ENCODE measurements at regions of chr2 and their contacts with region 1.

Region 1: GRCh38 chr2:27890146-27890923 is at the starts of genes BABAM2 and RBKS:
- DNase-seq: peak; percentile 89 to 90
- ATAC-seq: peak; percentile 93 to 98 (median 96)
- H3K4me3 ChIP-seq: peak within 1 kb of the TSS; percentile 55 to 84 (median 80)
- H3K27ac ChIP-seq: peak within 1 kb of the TSS; percentile 80 to 99 (median 98)
- H3K4me1 ChIP-seq: peaks cover 0 to 61% (median 34%) of the 10 kb centered on the region in 9 donors
- H3K27me3 ChIP-seq: no peaks in the 10 kb centered on the region
- CTCF ChIP-seq: no peak
- total RNA-seq, gene BABAM2: 54.9 to 83.4 (median 69.3) TPM
- total RNA-seq, gene RBKS: 3.4 to 9.1 (median 5.5) TPM

Region 2: DNA sequence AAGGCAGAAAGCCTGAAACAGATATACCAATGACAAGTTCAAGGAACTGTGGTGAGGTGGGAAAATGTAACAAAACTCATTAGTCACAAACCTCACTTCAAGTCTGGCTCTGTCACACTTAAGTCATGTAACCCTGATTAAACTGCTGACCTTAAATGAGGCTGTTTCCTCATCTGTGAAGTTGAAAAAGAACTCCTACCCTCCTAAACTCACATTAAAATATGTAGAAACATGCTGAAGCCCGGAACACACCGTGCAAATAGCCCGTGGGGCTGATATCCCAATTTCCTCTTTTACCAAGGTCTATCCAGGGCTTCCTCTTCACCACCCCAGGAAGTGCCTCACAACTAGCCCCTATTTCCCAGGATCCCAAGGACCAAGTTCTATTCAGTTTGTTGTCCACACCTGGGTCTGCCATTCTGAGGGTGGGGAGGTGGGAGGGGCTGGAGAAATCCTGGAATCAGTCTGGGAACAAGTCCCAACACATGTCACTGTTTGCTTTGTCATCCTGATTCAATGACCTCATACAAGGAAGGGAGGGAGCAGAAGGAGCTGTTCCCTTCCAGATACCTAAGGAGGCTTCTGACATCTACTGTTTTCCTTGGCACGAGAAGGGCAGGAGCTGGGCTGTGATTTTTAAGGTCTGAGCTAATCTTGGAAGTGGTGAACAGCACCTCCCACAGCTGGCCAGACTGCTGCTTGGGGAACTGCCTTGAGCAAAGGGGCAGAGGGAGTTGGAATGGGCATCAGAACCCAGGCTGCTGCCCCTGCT is 184.3 kb before region 1 on chr2:
- intact Hi-C with region 1: no loop called
- DNase-seq: peak; percentile 27 to 70
- ATAC-seq: peak; percentile 70 to 92 (median 86)
- H3K4me3 ChIP-seq: no peak overlapping the region
- H3K27ac ChIP-seq: peak overlapping the region; percentile 40 to 82 (median 78)
- H3K4me1 ChIP-seq: peaks cover 7 to 55% (median 28%) of the 10 kb centered on the region in 9 donors
- H3K27me3 ChIP-seq: no peaks in the 10 kb centered on the region
- CTCF ChIP-seq: no peak

Region 3: DNA sequence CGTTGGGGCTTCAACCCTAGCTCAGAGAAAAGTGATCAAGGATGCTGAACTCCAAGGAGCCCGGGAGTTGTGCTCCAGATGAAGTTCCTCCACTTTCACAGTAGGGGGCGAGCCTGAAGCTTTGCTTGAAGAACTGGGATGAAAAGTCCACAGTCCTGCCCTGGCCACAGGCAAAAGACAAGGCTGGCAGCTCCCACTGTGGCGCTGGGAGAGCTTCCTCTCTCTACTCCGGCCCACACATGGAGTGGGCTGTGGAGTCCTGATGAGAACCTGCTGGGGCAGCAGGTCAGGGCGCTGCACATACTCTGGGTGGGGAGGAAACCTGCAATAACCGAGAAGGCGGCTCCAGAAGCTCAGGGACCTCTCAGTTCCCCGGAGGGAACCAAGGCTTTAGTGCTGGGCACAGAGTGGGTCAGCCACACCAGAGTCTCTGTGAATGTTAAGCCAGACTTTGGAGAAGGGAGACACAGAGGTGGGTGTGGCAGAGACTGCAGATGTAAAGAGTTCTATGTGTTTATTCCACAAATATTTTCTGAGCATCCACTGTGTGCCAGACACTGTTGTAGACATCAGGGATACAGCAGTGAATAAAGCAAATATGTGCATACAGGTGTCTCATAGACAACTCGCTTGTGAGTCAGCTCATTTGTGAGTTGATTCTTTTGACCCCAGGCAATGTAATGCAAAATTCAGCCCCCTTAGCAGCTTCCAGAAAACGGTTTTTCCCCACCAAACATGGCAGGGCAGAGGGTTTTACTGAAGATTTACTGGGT is 166.8 kb before region 1 on chr2:
- intact Hi-C with region 1: loop called in 1 of 10 experiments (anchors 10 kb)
- DNase-seq: peak; percentile 43 to 72
- ATAC-seq: peak; percentile 50 to 80 (median 72)
- H3K4me3 ChIP-seq: no peak overlapping the region
- H3K27ac ChIP-seq: peak overlapping the region in 9 of 10 donors; percentile 49 to 84 (median 73)
- H3K4me1 ChIP-seq: peaks cover 4 to 60% (median 42%) of the 10 kb centered on the region in 9 donors
- H3K27me3 ChIP-seq: no peaks in the 10 kb centered on the region
- CTCF ChIP-seq: peak; percentile 69 to 91 (median 85)

Region 4: GRCh38 chr2:27807476-27807875 is 82.9 kb before region 1 on chr2:
- intact Hi-C with region 1: loop called in 1 of 10 experiments (anchors 10 kb)
- DNase-seq: no peak
- ATAC-seq: peak in 4 of 8 donors; percentile 40 to 59 (median 51)
- H3K4me3 ChIP-seq: no peak overlapping the region
- H3K27ac ChIP-seq: no peak overlapping the region
- H3K4me1 ChIP-seq: peaks cover 0 to 45% (median 0%) of the 10 kb centered on the region in 9 donors
- H3K27me3 ChIP-seq: no peaks in the 10 kb centered on the region
- CTCF ChIP-seq: peak in 7 of 9 donors; percentile 45 to 63 (median 57)

Region 5: DNA sequence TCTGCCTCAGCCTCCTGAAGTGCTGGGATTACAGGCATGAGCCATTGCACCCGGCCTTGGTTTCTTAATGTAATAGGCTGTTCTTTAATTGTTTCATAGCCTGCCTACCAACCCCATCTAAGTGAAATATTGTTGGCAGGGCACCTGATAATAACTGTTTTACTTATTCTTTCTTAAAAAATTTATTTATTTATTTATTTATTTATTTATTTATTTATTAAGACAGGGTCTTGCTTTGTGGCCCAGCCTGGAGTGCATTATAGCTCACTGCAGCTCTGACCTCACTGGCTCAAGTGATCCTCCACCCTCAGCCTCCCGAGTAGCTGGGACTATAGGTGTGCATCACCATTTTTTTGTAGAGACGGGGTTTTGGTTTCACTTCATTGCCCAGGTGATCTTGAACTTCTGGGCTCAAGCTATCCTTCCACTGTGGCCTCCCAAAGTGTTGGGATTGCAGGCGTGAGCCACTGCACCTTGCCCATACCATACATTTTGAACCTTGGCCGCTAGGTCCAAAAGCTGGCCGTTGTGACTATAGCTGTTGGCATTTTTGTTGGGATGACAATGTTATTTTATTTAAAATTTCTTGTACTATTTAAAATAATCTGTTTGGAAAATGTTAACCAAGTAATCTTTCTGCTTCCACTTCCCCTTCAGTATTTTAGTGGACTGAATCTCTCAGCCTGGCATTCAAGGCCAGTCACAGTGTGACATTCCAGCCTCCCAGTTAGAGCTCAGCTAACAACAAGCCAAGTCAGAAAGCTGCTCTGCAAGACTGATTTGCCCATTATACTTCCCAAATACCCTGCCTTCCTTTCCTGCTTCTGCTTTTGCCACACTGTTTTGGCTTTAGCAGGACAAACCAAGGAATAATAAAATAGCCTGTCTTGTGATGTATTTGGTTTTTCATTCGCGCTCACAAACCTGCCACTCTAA is 52.5 kb after region 1 on chr2:
- intact Hi-C with region 1: loop called in 1 of 10 experiments (anchors 5 kb)
- DNase-seq: no peak
- ATAC-seq: peak in 1 of 8 donors; percentile 31
- H3K4me3 ChIP-seq: no peak overlapping the region
- H3K27ac ChIP-seq: peak overlapping the region in 1 of 10 donors; percentile 22
- H3K4me1 ChIP-seq: peaks cover 0 to 30% (median 9%) of the 10 kb centered on the region in 9 donors
- H3K27me3 ChIP-seq: no peaks in the 10 kb centered on the region
- CTCF ChIP-seq: no peak

Region 6: GRCh38 chr2:28036307-28036706 is 146.0 kb after region 1 on chr2:
- intact Hi-C with region 1: loop called in 1 of 10 experiments (anchors 5 kb)
- DNase-seq: no peak
- ATAC-seq: peak in 3 of 8 donors; percentile 47 to 60 (median 58)
- H3K4me3 ChIP-seq: no peak overlapping the region
- H3K27ac ChIP-seq: peak overlapping the region in 8 of 10 donors; percentile 7 to 64 (median 43)
- H3K4me1 ChIP-seq: peaks cover 0 to 45% (median 7%) of the 10 kb centered on the region in 9 donors
- H3K27me3 ChIP-seq: no peaks in the 10 kb centered on the region
- CTCF ChIP-seq: no peak